Panc1 (cell line): ENCODE measurements at regions of chr10 and their contacts with region 1.

Region 1: GRCh38 chr10:61903221-61903927 is 1.9 kb downstream of the ARID5B start:
- DNase-seq: no peak
- ATAC-seq: peak; percentile 52
- H3K4me3 ChIP-seq: peak overlapping the region; percentile 62 to 93
- H3K27ac ChIP-seq: peak overlapping the region; percentile 100
- H3K4me1 ChIP-seq: peaks cover 54% of the 10 kb centered on the region
- H3K27me3 ChIP-seq: no peaks in the 10 kb centered on the region
- CTCF ChIP-seq: peak; percentile 48; the same call in 1 of the 2 replicates

Region 2: GRCh38 chr10:61750929-61751471 is 152.4 kb before region 1 on chr10:
- CTCF ChIA-PET with region 1: interaction called, 3 read pairs
- POLR2A ChIA-PET with region 1: interaction called, 10 read pairs
- in situ Hi-C with region 1: no loop called
- intact Hi-C with region 1: loop called (anchors 5 kb)
- DNase-seq: no peak
- ATAC-seq: peak; percentile 85
- H3K4me3 ChIP-seq: no peak overlapping the region
- H3K27ac ChIP-seq: peak overlapping the region; percentile 94
- H3K4me1 ChIP-seq: peaks cover 37% of the 10 kb centered on the region
- H3K27me3 ChIP-seq: no peaks in the 10 kb centered on the region
- CTCF ChIP-seq: peak; percentile 85

Region 3: DNA sequence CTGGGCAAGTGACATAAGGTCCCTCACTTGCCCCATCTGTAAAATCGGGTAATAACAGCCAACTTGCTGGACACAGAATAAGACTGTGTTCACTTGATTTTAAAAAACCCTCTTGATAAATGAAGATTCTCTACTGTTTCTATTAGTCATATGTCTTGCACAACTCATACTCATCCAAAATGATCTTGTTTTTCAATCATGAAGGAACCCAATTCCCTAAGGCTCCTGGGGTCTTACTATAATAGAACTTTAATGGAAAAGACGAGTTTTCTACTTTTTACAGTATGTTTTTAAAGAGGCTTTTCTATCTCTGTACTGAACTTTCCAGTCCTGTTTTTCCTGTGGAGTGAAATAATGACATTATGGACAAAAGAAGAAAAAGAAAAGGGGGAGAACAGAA is 101.9 kb after region 1 on chr10:
- CTCF ChIA-PET with region 1: no interaction called
- POLR2A ChIA-PET with region 1: no interaction called
- in situ Hi-C with region 1: no loop called
- intact Hi-C with region 1: no loop called
- DNase-seq: no peak
- ATAC-seq: no peak
- H3K4me3 ChIP-seq: no peak overlapping the region
- H3K27ac ChIP-seq: peak overlapping the region; percentile 52; the same call in 1 of the 2 replicates
- H3K4me1 ChIP-seq: peaks cover 12% of the 10 kb centered on the region; the same call in 1 of the 2 replicates
- H3K27me3 ChIP-seq: no peaks in the 10 kb centered on the region
- CTCF ChIP-seq: no peak

Region 4: DNA sequence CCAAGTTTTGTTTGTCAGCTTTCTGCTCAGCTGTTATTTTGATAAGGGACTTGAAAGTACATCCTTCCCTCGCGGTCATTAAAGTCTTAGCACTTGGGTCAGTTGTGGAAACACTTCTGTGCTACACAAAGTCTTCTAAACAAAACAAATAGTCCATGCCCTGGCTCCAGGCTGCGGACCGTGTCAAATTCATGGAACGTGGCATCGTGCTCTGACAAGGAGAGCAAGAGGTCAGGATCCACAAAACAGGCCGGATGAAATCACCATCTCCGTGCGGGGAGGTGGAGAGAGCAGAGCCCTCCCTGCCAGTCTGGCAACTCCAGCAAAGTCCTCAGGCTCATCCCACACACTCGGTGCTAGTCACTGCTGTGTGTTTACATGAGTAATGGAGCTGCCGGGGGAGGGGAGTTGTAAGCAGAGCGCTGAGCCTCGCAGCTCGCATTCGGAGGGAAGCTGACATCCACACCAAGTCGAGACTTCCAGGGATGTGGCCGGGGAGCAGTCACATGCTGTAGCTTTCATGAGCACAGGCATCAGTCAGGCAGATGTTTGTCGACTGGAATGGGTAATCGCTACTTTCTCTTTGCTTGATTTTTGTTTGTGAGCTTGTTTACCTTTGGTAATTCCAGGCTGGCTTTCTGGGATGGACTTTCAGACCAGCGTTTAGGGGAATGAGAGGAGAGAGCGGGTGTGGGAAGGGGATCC is 145.7 kb after region 1 on chr10:
- CTCF ChIA-PET with region 1: no interaction called
- POLR2A ChIA-PET with region 1: no interaction called
- in situ Hi-C with region 1: no loop called
- intact Hi-C with region 1: loop called (anchors 5 kb)
- DNase-seq: peak; percentile 88
- ATAC-seq: peak; percentile 91
- H3K4me3 ChIP-seq: peak overlapping the region; percentile 40 to 68
- H3K27ac ChIP-seq: peak overlapping the region; percentile 87
- H3K4me1 ChIP-seq: peaks cover 70% of the 10 kb centered on the region
- H3K27me3 ChIP-seq: no peaks in the 10 kb centered on the region
- CTCF ChIP-seq: no peak

Region 5: DNA sequence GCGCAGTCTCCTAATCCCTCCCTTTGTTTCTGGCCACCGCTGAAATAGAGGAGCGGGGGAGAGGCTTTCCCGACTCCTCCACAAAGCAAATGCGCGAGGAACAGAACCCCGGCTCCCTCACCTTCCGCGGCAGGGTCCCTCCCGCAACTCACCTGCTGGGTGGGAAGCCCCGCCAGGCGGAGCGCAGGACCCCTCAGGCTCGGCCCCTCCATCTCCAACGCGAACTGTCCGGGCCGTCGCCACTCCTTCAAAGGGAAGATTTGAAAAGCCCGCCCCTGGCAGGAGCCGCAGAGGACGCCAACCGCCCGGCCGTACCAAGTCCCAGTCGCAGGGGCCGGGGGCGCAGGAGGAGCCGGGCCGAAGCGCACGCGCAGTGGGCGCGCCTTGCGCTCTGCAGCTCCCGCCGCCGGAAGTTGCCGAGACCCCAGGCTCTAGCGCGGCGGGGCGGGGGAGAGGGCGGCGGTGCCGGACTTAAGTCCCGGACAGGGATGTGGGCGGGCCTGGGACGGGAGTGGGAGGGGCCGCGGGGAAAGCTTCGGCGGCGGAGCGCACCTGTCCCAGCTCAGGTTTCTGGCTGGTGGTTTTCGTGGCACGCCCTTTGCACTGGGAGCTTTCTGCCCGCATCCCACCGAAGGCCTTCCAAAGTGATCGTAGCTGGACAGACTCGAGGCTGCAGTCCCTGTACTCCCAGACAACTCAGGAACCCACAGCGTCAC is 365.2 kb after region 1 on chr10 and contains the start of gene RTKN2:
- CTCF ChIA-PET with region 1: no interaction called
- POLR2A ChIA-PET with region 1: interaction called, 3 read pairs
- in situ Hi-C with region 1: no loop called
- intact Hi-C with region 1: loop called (anchors 10 kb)
- DNase-seq: no peak
- ATAC-seq: peak; percentile 93
- H3K4me3 ChIP-seq: peak within 1 kb of the TSS; percentile 77 to 98
- H3K27ac ChIP-seq: peak within 1 kb of the TSS; percentile 92
- H3K4me1 ChIP-seq: peaks cover 47% of the 10 kb centered on the region
- H3K27me3 ChIP-seq: no peaks in the 10 kb centered on the region
- CTCF ChIP-seq: no peak
- total RNA-seq, gene RTKN2: 21.3 TPM